HEK293 (cell line): ENCODE measurements at regions of chr12 and their contacts with region 1.

Region 1: GRCh38 chr12:19186722-19187661 is 57.5 kb downstream of the PLEKHA5 start:
- H3K4me3 ChIP-seq: no peak overlapping the region
- H3K27ac ChIP-seq: no peak overlapping the region
- H3K4me1 ChIP-seq: no peaks in the 10 kb centered on the region
- CTCF ChIP-seq: no peak

Region 2: DNA sequence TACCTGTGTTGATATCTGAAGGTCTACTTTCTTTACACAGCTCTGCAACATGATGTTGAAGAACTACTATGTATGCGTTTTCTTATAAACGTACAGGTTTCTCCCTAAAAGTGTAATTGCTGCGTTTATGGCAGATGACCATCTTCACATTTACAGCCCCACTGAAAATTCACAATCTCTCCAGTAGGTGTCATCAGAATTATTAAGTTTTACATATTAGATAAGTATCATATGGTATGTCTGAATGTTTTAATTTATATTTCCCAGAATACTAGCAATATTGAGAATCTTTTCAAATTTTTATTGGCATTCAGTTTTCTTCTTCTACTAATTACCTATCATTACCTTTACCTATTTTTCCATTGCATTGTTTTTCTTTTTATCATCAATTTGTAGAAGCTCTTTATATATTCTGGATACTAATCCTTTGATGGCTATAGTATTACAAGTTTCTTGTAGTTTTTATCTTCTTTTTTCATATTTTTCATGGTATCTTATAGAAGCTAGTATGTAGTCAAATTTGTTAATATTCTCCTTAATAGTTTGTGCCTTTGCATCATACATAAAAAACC is 325.6 kb before region 1 on chr12:
- CTCF ChIA-PET with region 1: interaction called, 13 read pairs
- POLR2A ChIA-PET with region 1: no interaction called
- H3K4me3 ChIP-seq: no peak overlapping the region
- H3K27ac ChIP-seq: no peak overlapping the region
- H3K4me1 ChIP-seq: no peaks in the 10 kb centered on the region
- CTCF ChIP-seq: no peak

Region 3: GRCh38 chr12:19196959-19197630 is 10.1 kb after region 1 on chr12:
- CTCF ChIA-PET with region 1: interaction called, 17 read pairs
- POLR2A ChIA-PET with region 1: no interaction called
- H3K4me3 ChIP-seq: no peak overlapping the region
- H3K27ac ChIP-seq: no peak overlapping the region
- H3K4me1 ChIP-seq: no peaks in the 10 kb centered on the region
- CTCF ChIP-seq: no peak